ENCODE measurements at regions of chr12 and their contacts with region 1.

Region 1: DNA sequence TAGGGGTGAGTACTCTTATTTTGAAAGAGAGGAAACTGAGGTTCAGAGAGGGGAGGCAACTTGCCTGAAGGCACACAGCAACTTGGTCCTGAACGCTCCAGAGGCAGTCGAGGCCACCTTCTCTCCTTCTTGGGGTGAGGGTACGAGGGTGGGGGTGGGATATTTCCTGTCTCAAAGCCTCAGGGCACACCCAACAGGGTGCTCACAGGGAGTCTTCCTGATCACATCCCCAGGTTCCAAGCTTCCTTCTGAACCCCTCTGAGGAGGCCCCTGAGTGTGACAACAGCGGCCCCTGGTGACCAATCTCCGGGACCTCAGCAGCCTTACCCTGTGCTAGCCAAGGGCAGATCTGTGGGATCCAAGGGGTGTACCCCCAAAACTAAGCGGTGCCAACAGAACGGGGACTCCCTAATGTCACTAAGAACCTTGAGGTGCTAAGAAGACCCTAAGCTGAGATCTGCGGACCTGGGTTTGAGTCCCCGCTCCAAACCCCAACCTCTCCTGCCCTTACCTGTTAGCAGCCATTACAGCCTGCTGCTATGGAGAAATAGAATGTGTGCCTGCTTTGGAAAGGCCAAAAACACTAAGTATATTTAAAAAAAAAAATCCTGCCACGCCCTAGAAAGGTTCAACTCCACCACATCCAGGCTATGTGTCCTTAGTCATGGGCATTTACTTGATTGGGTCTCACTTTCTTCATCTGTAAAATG is 57.9 kb downstream of the TRPV4 start:
- DNase-seq: peak; percentile 83
- ATAC-seq: peak; percentile 80
- H3K4me3 Mint-ChIP-seq: no peak overlapping the region
- H3K27ac Mint-ChIP-seq: no peak overlapping the region
- H3K4me1 Mint-ChIP-seq: peaks cover 5% of the 10 kb centered on the region
- H3K27me3 Mint-ChIP-seq: no peaks in the 10 kb centered on the region
- CTCF ChIP-seq: peak; percentile 78

Region 2: GRCh38 chr12:109428037-109428629 is 347.2 kb before region 1 on chr12:
- CTCF ChIA-PET with region 1: interaction called, 9 read pairs
- POLR2A ChIA-PET with region 1: no interaction called
- intact Hi-C with region 1: loop called (anchors 5 kb)
- DNase-seq: peak; percentile 81
- ATAC-seq: peak; percentile 95
- H3K4me3 Mint-ChIP-seq: no peak overlapping the region
- H3K27ac Mint-ChIP-seq: no peak overlapping the region
- H3K4me1 Mint-ChIP-seq: peaks cover 5% of the 10 kb centered on the region
- H3K27me3 Mint-ChIP-seq: peaks cover 6% of the 10 kb centered on the region
- CTCF ChIP-seq: peak; percentile 90

Region 3: DNA sequence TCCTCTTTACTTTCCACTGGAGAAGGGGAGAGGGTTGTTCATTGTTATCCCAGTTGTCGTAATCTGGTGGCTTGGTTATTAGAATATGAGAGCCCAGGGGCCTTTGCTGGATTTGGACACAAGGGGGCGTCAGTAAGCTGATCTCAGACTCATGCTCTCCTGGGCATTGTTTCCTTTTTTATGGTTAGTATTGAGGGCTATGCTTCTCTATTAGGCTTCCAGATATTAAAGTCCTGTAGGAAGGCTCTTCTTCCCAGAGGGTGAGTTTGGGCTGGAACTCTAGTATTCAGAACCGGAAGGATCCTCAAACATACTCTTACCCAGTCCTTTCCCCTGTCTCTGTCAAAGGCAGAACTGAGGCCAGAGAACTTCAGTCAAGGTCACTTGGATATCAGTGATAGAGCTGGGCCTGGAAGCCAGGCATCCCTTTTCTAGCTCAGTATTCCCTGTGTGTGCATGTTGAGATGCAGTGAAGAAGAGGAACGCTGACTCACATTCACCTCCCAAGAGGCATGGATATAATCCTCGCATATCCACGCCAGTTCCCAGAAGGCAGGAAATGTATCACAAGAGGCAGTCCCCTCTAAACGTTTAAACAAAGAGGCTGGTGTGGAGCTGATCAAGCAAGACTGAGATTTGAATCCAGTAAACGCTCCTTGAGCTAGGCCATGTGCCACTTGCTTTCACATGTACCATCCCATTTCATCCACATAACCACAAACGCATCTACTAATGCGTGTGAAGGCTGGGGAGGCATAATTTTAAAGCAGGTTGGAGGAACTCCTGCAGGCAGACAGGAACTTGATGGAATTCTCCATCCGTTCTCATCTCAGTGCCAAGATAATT is 256.3 kb before region 1 on chr12:
- CTCF ChIA-PET with region 1: interaction called, 53 read pairs
- POLR2A ChIA-PET with region 1: no interaction called
- intact Hi-C with region 1: loop called (anchors 5 kb)
- DNase-seq: peak; percentile 78
- ATAC-seq: peak; percentile 76
- H3K4me3 Mint-ChIP-seq: no peak overlapping the region
- H3K27ac Mint-ChIP-seq: no peak overlapping the region
- H3K4me1 Mint-ChIP-seq: no peaks in the 10 kb centered on the region
- H3K27me3 Mint-ChIP-seq: no peaks in the 10 kb centered on the region
- CTCF ChIP-seq: peak; percentile 73

Region 4: DNA sequence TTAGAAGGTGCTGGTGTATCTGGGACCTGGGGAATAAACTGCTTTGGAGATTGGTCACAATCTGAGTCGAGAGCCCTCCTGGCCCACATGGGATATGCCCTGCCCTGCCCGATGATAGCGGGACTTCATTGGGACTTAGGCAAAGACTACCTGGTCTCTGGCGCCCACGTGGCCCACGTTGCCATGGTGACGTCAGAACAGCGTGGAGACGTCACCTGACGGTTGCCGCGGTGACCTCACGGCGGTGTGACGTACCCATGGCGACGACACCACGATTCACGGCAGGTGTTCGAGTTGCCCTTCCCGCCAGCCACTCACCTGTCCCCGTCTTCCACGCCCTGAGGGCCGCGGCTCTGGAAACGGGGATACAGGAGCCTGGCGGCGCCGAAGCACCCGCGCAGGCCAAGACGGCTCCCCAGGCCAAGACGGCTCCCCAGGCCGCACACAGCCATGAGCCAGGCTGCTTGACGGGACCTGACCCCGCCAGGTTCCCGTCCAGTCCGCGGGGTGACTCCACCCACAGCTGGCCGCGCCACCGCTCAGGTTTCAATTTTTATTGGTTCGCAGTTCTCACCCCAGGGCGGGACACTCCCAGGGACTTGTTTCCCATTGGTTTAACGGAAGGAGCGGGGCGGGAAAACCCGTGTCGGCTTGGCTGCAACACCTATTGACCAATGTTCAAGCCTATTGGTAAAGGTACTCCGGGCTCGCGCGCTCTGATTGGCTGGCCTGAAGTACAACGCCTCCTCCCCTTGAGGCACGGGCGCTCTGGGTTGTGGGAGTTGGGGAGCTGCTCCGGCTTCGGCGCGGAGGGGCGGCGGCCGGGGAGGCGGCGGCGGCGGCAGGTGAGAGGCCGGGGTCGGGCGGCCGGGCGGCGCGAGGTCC is 202.1 kb before region 1 on chr12 and contains the starts of genes MMAB and MVK:
- CTCF ChIA-PET with region 1: interaction called, 10 read pairs
- POLR2A ChIA-PET with region 1: no interaction called
- intact Hi-C with region 1: no loop called
- DNase-seq: peak; percentile 100
- ATAC-seq: peak; percentile 98
- H3K4me3 Mint-ChIP-seq: peak within 1 kb of the TSS; percentile 96
- H3K27ac Mint-ChIP-seq: peak within 1 kb of the TSS; percentile 97
- H3K4me1 Mint-ChIP-seq: peaks cover 28% of the 10 kb centered on the region
- H3K27me3 Mint-ChIP-seq: no peaks in the 10 kb centered on the region
- CTCF ChIP-seq: no peak
- total RNA-seq, gene MMAB: 60.5 to 60.9 TPM
- total RNA-seq, gene MVK: 16.2 to 19.8 TPM

Measured in activated CD8-positive, alpha-beta T cell treated with anti-CD3 and anti-CD28 coated beads for 36 hours (primary cell).